ENCODE measurements at regions of chr3 and their contacts with region 1.

Region 1: DNA sequence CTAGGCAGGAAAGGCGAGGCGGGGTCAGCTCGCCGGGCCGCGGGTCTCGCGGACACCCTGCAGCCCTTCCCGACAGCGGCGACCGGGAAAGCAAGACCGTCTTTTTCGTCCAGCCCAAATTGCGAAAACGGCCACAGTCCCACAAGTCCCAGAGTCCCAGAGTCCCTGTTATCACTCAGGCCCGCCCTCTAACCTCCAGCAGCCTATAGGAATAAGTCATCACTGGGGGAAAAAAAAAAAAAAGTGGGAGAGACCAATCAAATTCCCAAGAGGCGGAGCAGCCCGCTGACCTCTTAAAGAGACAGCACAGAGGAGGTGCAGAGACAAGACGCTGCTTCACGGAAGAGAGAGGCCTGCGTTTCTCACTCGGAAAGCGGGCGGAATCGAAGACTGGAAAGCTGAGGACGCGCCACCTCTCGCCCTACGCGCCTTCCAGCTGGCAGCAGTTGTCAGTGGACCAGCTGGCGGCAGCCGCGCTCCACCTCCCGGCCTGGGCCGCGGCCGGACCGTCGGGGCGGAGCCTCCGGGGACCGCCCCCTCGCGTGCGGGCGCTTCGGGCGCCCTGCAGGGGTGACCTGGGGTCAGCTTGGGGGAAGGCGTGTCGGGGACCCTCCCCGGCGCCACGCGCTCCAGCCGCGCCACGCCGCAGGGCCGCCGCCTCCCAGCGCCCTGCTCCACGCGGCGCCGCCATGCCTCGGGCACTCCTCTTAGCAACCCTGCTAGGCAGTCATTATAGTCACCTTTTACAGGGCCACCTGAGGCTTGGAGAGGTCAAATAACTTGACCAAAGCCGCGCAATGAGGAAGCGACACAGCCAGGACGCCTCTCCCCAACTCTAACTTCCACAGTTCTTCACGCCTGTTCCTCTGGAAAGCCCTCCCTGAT is at the start of gene TPRA1:
- DNase-seq: peak; percentile 89 to 91 (median 89)
- H3K4me3 ChIP-seq: peak within 1 kb of the TSS; percentile 97
- H3K27ac ChIP-seq: peak within 1 kb of the TSS; percentile 80 to 91
- H3K4me1 ChIP-seq: peaks cover 15% of the 10 kb centered on the region
- H3K27me3 ChIP-seq: no peaks in the 10 kb centered on the region
- CTCF ChIP-seq: no peak
- EP300 ChIP-seq: no peak
- POLR2A ChIP-seq: peak; percentile 12
- total RNA-seq, gene TPRA1: 31.5 to 40.3 (median 36.7) TPM

Region 2: GRCh38 chr3:127672516-127673190 is 81.8 kb after region 1 on chr3 and contains the start of gene ABTB1:
- intact Hi-C with region 1: loop called in 1 of 4 experiments (anchors 10 kb)
- DNase-seq: peak; percentile 81 to 90 (median 87)
- H3K4me3 ChIP-seq: peak within 1 kb of the TSS; percentile 81
- H3K27ac ChIP-seq: peak within 1 kb of the TSS; percentile 81 to 89
- H3K4me1 ChIP-seq: peaks cover 7% of the 10 kb centered on the region
- H3K27me3 ChIP-seq: no peaks in the 10 kb centered on the region
- CTCF ChIP-seq: no peak
- EP300 ChIP-seq: no peak
- POLR2A ChIP-seq: peak; percentile 79
- total RNA-seq, gene ABTB1: 10.0 to 42.4 (median 26.7) TPM

Region 3: GRCh38 chr3:128084391-128084963 is 493.6 kb after region 1 on chr3:
- intact Hi-C with region 1: no loop called
- DNase-seq: peak in 2 of 5 donors; percentile 38 to 60
- H3K4me3 ChIP-seq: no peak overlapping the region
- H3K27ac ChIP-seq: peak overlapping the region; percentile 2 to 26
- H3K4me1 ChIP-seq: peaks cover 9% of the 10 kb centered on the region
- H3K27me3 ChIP-seq: no peaks in the 10 kb centered on the region
- CTCF ChIP-seq: no peak
- EP300 ChIP-seq: no peak
- POLR2A ChIP-seq: no peak